ENCODE measurements at regions of chr6 and their contacts with region 1.

Region 1: DNA sequence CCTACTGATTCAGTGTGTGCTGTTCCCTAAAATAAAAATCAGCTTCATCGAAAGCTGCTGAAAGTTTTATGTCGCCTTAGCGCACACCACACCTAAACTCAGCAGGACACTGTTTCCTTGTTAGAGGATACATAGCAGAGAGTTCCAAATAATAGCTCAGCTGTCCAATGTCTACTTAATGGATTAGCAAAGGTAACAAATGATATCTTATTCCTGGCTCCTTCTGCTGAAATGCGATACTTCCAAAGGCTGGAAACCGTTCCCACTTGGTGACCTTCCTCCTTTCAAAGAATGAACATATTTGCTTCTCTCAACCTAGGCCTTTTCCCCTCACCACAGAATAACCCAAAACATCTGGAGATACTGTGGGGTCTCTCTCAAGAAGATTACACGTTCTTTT is 189.5 kb upstream of the GMDS start:
- DNase-seq: no peak
- CTCF ChIP-seq: no peak

Region 2: DNA sequence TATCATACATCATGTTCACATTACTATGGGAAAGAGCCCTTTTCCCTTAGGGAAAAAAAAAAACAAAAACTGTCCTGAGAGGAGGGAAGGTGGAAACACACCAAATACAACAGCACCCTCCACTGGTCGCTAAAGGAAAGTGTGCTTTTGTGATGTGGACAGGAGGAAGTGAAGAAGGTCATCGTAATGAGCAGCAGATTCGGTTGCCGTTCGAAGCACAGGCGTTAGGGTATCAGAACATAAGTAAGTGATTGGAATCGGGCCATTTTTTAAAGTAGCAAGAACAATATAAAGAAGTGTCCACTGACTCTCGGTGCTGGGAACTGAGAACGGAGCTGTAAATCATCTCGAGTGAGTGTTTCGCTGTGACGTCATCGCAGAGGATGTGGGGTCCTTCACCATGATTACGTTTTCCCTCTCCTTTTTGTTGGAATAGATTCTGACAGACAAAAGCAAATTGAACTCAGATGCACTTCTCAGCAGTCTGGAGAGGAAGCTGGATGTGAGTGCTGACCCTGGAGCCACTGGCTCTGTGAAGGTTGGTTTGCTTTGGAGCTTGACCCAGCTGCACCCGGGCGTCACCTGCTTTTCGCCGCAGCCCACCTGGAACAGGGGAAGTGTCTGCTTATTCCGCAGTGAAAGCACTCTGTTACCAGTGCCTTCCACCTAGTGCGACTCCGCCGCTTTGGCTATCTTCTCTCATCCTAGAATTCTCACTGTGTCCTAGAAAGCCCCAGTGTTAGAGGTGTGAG is 14.1 kb after region 1 on chr6:
- CTCF ChIA-PET with region 1: interaction called, 20 read pairs
- POLR2A ChIA-PET with region 1: no interaction called
- DNase-seq: peak; percentile 70
- CTCF ChIP-seq: peak; percentile 61

Measured in GM10248 (cell line).